Breast epithelium (tissue), 4 donors: ENCODE measurements at regions of chr9 and their contacts with region 1.

Region 1: GRCh38 chr9:24434183-24434582 is 111.5 kb downstream of the IZUMO3 start:
- DNase-seq: no peak
- H3K4me3 ChIP-seq: no peak overlapping the region
- H3K27ac ChIP-seq: no peak overlapping the region
- H3K4me1 ChIP-seq: no peaks in the 10 kb centered on the region
- H3K27me3 ChIP-seq: no peaks in the 10 kb centered on the region
- CTCF ChIP-seq: no peak
- POLR2A ChIP-seq: no peak

Region 2: DNA sequence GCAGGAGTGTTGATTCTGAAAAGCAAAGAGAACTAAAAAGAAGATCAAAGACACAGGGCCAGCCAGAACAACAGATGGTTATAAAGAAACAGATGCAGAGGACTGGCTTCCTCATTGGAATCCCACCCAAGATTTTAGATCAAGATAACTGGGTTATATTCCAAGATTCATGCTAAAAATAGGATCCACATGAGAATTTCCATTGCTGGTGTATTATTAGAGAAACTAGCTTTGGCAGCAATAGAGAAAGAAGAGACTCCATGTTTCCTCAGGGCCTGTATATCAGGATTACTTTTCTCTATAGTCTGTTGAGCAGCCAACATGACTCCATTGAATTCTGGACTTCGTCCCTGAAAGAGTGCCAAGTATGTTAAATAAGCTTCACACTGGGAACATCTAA is 876.8 kb after region 1 on chr9:
- intact Hi-C with region 1: loop called (anchors 5 kb)
- DNase-seq: no peak
- H3K4me3 ChIP-seq: no peak overlapping the region
- H3K27ac ChIP-seq: no peak overlapping the region
- H3K4me1 ChIP-seq: no peaks in the 10 kb centered on the region
- H3K27me3 ChIP-seq: no peaks in the 10 kb centered on the region
- CTCF ChIP-seq: no peak
- POLR2A ChIP-seq: no peak